ENCODE measurements at regions of chr7 and their contacts with region 1.

Region 1: GRCh38 chr7:134660961-134661376 is 14.3 kb downstream of the BPGM start:
- DNase-seq: no peak
- H3K4me3 ChIP-seq: no peak overlapping the region
- H3K27ac ChIP-seq: no peak overlapping the region
- H3K4me1 ChIP-seq: no peaks in the 10 kb centered on the region
- H3K27me3 ChIP-seq: no peaks in the 10 kb centered on the region
- CTCF ChIP-seq: no peak
- POLR2A ChIP-seq: no peak

Region 2: DNA sequence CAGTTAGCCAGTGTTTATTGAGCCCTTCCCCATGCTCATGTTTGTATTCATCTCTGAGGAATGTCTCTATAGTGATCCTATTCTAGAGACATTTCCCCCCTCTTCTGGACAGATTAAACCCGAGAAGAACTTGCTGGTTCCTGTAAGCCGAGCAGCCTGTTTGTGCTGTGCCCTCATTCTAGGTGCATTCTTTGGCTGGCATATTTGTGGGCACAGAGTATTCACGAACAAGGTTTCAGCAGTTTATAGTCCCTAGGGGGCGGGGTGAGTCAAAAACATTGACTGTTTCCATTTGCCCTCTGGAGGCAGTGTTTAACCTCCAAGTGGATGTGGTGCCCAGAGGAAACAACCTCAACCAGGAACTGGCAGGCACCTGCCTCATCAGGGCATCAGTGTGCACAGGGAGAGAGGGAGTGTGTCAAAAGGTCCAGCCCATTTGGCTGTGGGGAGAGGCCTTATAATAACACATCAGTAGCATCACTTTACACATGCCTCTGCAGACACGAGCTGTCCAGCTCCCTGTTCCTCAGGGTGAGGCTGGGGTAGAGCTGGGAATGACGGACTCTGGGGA is 807.2 kb before region 1 on chr7:
- intact Hi-C with region 1: no loop called
- DNase-seq: peak; percentile 60 to 72
- H3K4me3 ChIP-seq: no peak overlapping the region
- H3K27ac ChIP-seq: no peak overlapping the region
- H3K4me1 ChIP-seq: no peaks in the 10 kb centered on the region
- H3K27me3 ChIP-seq: no peaks in the 10 kb centered on the region
- CTCF ChIP-seq: peak in 2 of 3 donors; percentile 37 to 56
- POLR2A ChIP-seq: no peak

Region 3: DNA sequence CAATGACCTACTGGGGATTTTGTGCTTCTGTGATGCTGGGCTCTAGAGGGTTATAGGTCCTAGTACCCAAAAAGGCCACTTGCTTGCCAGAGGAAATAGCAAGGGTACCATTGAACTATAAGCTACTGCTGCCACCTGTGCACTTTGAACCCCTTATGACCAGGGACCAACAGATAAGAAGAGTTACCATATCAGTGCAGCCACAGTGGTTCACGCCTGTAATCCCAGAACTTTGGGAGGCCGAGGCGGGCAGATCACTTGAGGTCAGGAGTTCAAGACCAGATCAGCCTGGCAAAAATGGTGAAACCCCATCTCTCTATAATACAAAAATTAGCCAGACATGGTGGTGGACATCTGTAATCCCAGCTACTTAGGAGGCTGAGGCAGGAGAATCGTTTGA is 864.5 kb after region 1 on chr7:
- intact Hi-C with region 1: loop called (anchors 5 kb)
- DNase-seq: no peak
- H3K4me3 ChIP-seq: no peak overlapping the region
- H3K27ac ChIP-seq: no peak overlapping the region
- H3K4me1 ChIP-seq: no peaks in the 10 kb centered on the region
- H3K27me3 ChIP-seq: no peaks in the 10 kb centered on the region
- CTCF ChIP-seq: no peak
- POLR2A ChIP-seq: no peak

Measured in breast epithelium (tissue), 4 donors.